Sigmoid colon (tissue), 7 donors: ENCODE measurements at regions of chr7 and their contacts with region 1.

Region 1: GRCh38 chr7:7182156-7183060 is at the start of gene C1GALT1:
- DNase-seq: peak; percentile 99
- H3K4me3 ChIP-seq: peak within 1 kb of the TSS; percentile 73 to 98 (median 84)
- H3K27ac ChIP-seq: peak within 1 kb of the TSS; percentile 92 to 97 (median 95)
- H3K4me1 ChIP-seq: peaks cover 0 to 24% (median 16%) of the 10 kb centered on the region in 4 donors
- H3K27me3 ChIP-seq: no peaks in the 10 kb centered on the region
- CTCF ChIP-seq: peak; percentile 21 to 60 (median 52)
- EP300 ChIP-seq: no peak
- POLR2A ChIP-seq: peak; percentile 50 to 87
- total RNA-seq, gene C1GALT1: 10.0 to 19.8 (median 12.6) TPM

Region 2: GRCh38 chr7:6035686-6036085 is 1146.7 kb before region 1 on chr7:
- intact Hi-C with region 1: no loop called
- DNase-seq: no peak
- H3K4me3 ChIP-seq: no peak overlapping the region
- H3K27ac ChIP-seq: no peak overlapping the region
- H3K4me1 ChIP-seq: no peaks in the 10 kb centered on the region
- H3K27me3 ChIP-seq: no peaks in the 10 kb centered on the region
- CTCF ChIP-seq: no peak
- EP300 ChIP-seq: no peak
- POLR2A ChIP-seq: no peak

Region 3: DNA sequence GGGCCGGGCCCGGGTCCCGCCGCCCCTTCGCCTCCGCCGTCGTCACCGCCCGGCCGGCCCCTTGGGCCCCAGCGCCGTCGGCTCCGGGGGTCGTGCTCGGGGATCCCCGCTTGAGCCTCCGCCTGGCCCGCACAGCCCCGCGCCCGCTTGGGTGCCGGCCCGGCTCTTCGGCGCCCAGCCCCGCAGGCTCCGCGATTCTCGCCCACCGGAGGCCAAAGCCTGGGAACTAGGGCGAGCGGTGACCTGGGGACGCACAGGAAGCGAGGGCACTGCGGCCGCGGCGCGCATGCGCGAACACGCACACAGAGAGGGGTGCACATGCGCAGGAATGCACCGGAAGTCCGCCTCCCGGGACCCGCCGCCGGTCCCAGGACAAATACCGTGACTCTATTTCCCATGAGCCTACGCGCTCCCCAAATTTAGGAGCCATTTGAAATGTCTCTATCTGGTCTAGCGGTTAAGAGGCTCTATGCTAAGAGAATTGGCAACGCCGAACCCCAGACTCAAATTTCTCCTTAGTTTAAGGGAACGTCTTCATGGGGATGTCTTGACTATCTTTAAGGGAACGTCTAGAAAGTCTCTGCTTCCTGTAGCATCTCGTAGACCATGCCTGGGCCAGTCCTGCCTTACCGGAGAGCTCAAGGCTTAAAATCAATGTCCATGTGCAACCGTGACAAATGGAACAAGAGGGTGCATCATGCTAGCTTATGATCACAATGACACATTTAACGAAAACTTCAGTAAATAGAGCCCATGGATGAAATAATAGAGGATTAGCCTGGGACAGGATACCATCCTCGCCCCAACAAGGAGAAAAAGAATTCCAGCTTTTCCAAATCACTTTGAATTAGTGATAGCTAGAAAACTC is 475.5 kb before region 1 on chr7 and contains the start of gene ZNF12:
- intact Hi-C with region 1: loop called (anchors 10 kb)
- DNase-seq: peak; percentile 99
- H3K4me3 ChIP-seq: peak within 1 kb of the TSS; percentile 90 to 100 (median 95)
- H3K27ac ChIP-seq: peak within 1 kb of the TSS; percentile 81 to 96 (median 86)
- H3K4me1 ChIP-seq: peaks cover 0 to 35% (median 25%) of the 10 kb centered on the region in 4 donors
- H3K27me3 ChIP-seq: no peaks in the 10 kb centered on the region
- CTCF ChIP-seq: no peak
- EP300 ChIP-seq: peak in 1 of 4 donors; percentile 52
- POLR2A ChIP-seq: peak; percentile 30 to 38
- total RNA-seq, gene ZNF12: 17.2 to 27.1 (median 22.9) TPM

Region 4: GRCh38 chr7:6917258-6917657 is 265.1 kb before region 1 on chr7:
- intact Hi-C with region 1: no loop called
- DNase-seq: no peak
- H3K4me3 ChIP-seq: no peak overlapping the region
- H3K27ac ChIP-seq: no peak overlapping the region
- H3K4me1 ChIP-seq: no peaks in the 10 kb centered on the region
- H3K27me3 ChIP-seq: no peaks in the 10 kb centered on the region
- CTCF ChIP-seq: no peak
- EP300 ChIP-seq: no peak
- POLR2A ChIP-seq: no peak

Region 5: DNA sequence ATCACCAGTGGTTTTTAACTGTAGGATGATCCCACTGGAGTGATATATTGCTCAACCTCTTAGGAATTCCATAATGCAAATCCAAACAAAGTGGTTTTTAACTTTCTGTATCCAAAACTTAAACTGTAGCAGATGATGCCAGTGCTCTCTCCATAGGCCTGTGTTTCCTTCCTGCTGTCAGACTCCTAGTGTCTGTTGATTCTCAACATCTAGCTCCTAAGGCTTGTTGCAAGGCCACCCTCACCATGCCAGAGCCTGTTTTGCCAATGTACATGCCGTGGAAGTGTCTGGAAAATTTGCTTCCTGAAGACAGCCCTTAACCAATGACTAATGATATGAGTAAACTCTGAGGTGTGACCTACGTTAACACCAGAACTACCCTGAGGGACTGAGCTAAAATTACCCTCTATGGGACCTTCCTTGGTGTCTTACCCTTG is 39.2 kb after region 1 on chr7:
- intact Hi-C with region 1: loop called (anchors 5 kb)
- DNase-seq: no peak
- H3K4me3 ChIP-seq: no peak overlapping the region
- H3K27ac ChIP-seq: peak overlapping the region in 2 of 4 donors; percentile 9 to 40
- H3K4me1 ChIP-seq: peaks cover 0 to 13% (median 6%) of the 10 kb centered on the region in 4 donors
- H3K27me3 ChIP-seq: no peaks in the 10 kb centered on the region
- CTCF ChIP-seq: no peak
- EP300 ChIP-seq: no peak
- POLR2A ChIP-seq: no peak

Region 6: GRCh38 chr7:7566651-7567611 is 384.5 kb after region 1 on chr7 and contains the start of gene MIOS:
- intact Hi-C with region 1: loop called (anchors 5 kb)
- DNase-seq: peak; percentile 92
- H3K4me3 ChIP-seq: peak within 1 kb of the TSS; percentile 52 to 88 (median 70)
- H3K27ac ChIP-seq: peak within 1 kb of the TSS; percentile 84 to 94 (median 91)
- H3K4me1 ChIP-seq: peaks cover 0 to 21% (median 16%) of the 10 kb centered on the region in 4 donors
- H3K27me3 ChIP-seq: no peaks in the 10 kb centered on the region
- CTCF ChIP-seq: no peak
- EP300 ChIP-seq: no peak
- POLR2A ChIP-seq: no peak
- total RNA-seq, gene MIOS: 20.8 to 40.3 (median 30.7) TPM

Region 7: GRCh38 chr7:7640221-7641128 is 458.1 kb after region 1 on chr7 and contains the start of gene UMAD1:
- intact Hi-C with region 1: loop called (anchors 10 kb)
- DNase-seq: peak; percentile 99
- H3K4me3 ChIP-seq: peak within 1 kb of the TSS; percentile 68 to 87 (median 78)
- H3K27ac ChIP-seq: peak within 1 kb of the TSS; percentile 79 to 92 (median 90)
- H3K4me1 ChIP-seq: peaks cover 0 to 22% (median 16%) of the 10 kb centered on the region in 4 donors
- H3K27me3 ChIP-seq: no peaks in the 10 kb centered on the region
- CTCF ChIP-seq: no peak
- EP300 ChIP-seq: no peak
- POLR2A ChIP-seq: peak; percentile 40 to 69
- total RNA-seq, gene UMAD1: 11.1 to 20.7 (median 15.5) TPM

Region 8: GRCh38 chr7:7968543-7969305 is 786.3 kb after region 1 on chr7 and contains the start of gene GLCCI1:
- intact Hi-C with region 1: loop called (anchors 10 kb)
- DNase-seq: peak; percentile 98
- H3K4me3 ChIP-seq: peak within 1 kb of the TSS; percentile 87 to 95 (median 92)
- H3K27ac ChIP-seq: peak within 1 kb of the TSS; percentile 89 to 99 (median 97)
- H3K4me1 ChIP-seq: peaks cover 0 to 18% (median 7%) of the 10 kb centered on the region in 4 donors
- H3K27me3 ChIP-seq: no peaks in the 10 kb centered on the region
- CTCF ChIP-seq: no peak
- EP300 ChIP-seq: no peak
- POLR2A ChIP-seq: peak; percentile 58 to 79
- total RNA-seq, gene GLCCI1: 3.8 to 17.7 (median 10.6) TPM